ENCODE measurements at regions of chrX and their contacts with region 1.

Region 1: GRCh38 chrX:45806410-45807121 is 605.9 kb upstream of the DIPK2B start:
- DNase-seq: peak; percentile 42
- H3K4me3 Mint-ChIP-seq: peak overlapping the region; percentile 74
- H3K27ac Mint-ChIP-seq: peak overlapping the region; percentile 91
- H3K4me1 Mint-ChIP-seq: peaks cover 79% of the 10 kb centered on the region
- H3K27me3 Mint-ChIP-seq: no peaks in the 10 kb centered on the region

Region 2: DNA sequence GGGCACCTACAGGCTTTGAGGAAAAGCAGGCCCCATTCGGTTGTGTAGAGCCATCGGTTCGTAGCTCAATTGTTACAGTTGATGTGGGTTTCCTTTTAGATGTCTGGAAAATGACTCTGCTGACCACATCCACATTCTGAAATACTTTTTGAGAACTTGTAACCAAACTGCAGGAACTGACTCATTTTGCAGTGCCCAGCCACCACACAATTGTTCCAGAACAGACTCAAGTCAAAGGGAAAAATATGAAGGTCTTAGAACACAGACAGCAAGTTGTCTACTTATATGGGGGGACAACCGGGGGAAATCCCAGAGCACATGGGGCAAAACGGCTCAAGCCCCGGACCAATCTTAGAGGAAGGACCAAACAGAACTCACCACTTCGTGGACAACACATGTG is 48.2 kb before region 1 on chrX:
- intact Hi-C with region 1: loop called (anchors 1 kb)
- DNase-seq: peak; percentile 38
- H3K4me3 Mint-ChIP-seq: peak overlapping the region; percentile 64
- H3K27ac Mint-ChIP-seq: peak overlapping the region; percentile 98
- H3K4me1 Mint-ChIP-seq: peaks cover 65% of the 10 kb centered on the region
- H3K27me3 Mint-ChIP-seq: no peaks in the 10 kb centered on the region

Region 3: DNA sequence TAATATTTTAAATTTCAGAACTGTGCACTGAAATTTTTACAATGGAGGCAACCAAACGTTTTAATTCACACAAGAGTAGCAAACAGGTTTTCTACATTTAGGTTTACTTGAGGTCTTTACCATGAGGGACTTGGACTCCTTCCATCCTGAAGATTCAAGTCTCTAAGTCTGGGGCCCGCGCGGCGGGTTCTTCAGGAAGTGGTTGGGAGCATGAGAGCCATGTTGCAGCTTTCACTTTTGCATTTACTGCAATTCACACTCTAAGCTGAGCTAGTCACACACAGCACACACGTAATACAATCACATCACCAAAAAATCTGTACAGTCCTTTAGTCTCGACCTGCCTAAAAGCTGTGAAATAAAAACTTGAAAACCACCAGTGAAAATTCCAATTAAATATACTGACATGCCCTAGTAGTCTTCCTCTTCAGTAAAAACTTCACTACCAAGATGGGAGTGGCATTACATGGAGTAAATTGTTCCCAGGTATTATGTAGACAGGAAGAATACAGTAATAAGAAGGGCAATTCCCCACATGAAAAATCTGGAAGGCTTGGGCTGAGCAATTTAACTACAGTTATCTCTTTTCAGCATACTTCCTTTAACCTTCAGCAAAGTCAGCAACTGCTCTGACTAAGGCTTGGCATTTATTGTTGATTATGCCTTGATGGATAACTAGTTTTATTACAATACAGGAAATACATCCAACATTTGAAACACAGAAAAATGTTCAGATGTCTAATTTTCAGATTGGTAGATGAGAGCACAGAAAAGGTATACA is 34.8 kb before region 1 on chrX:
- intact Hi-C with region 1: loop called (anchors 1 kb)
- DNase-seq: peak; percentile 53
- H3K4me3 Mint-ChIP-seq: peak overlapping the region; percentile 80
- H3K27ac Mint-ChIP-seq: peak overlapping the region; percentile 94
- H3K4me1 Mint-ChIP-seq: peaks cover 60% of the 10 kb centered on the region
- H3K27me3 Mint-ChIP-seq: no peaks in the 10 kb centered on the region

Region 4: GRCh38 chrX:45818913-45819312 is 12.3 kb after region 1 on chrX:
- intact Hi-C with region 1: loop called (anchors 1 kb)
- DNase-seq: no peak
- H3K4me3 Mint-ChIP-seq: peak overlapping the region; percentile 13
- H3K27ac Mint-ChIP-seq: peak overlapping the region; percentile 85
- H3K4me1 Mint-ChIP-seq: peaks cover 37% of the 10 kb centered on the region
- H3K27me3 Mint-ChIP-seq: no peaks in the 10 kb centered on the region

Region 5: DNA sequence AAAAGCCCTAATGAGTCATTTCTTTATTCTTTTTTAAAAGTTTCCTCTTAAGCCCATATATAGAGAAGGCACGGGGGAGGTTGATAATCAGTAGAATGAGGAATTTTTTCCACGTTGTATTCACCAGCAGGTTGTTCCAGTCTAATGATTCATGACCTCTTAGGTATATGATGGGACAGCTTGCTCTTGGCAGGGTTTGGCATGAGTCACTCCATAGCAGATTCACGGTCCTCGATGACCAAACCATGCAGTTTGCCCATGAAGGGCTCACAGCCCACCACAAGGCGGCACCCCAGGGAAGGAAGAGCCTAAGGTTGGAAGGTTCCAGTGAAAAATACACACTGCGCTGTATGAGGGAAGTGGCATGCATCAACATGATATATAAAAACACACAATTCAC is 17.9 kb after region 1 on chrX:
- intact Hi-C with region 1: loop called (anchors 1 kb)
- DNase-seq: no peak
- H3K4me3 Mint-ChIP-seq: no peak overlapping the region
- H3K27ac Mint-ChIP-seq: peak overlapping the region; percentile 88
- H3K4me1 Mint-ChIP-seq: peaks cover 26% of the 10 kb centered on the region
- H3K27me3 Mint-ChIP-seq: no peaks in the 10 kb centered on the region

Region 6: GRCh38 chrX:46325312-46325877 is 518.8 kb after region 1 on chrX:
- intact Hi-C with region 1: loop called (anchors 2 kb)
- DNase-seq: peak; percentile 10
- H3K4me3 Mint-ChIP-seq: no peak overlapping the region
- H3K27ac Mint-ChIP-seq: peak overlapping the region; percentile 69
- H3K4me1 Mint-ChIP-seq: peaks cover 52% of the 10 kb centered on the region
- H3K27me3 Mint-ChIP-seq: no peaks in the 10 kb centered on the region